Sigmoid colon (tissue), 7 donors: ENCODE measurements at regions of chr21 and their contacts with region 1.

Region 1: GRCh38 chr21:31098576-31099005 is 60.3 kb upstream of the KRTAP19-8 start:
- DNase-seq: peak; percentile 80
- H3K4me3 ChIP-seq: no peak overlapping the region
- H3K27ac ChIP-seq: no peak overlapping the region
- H3K4me1 ChIP-seq: no peaks in the 10 kb centered on the region
- H3K27me3 ChIP-seq: peaks cover 0 to 15% (median 0%) of the 10 kb centered on the region in 3 donors
- CTCF ChIP-seq: peak; percentile 16 to 81 (median 48)
- EP300 ChIP-seq: no peak
- POLR2A ChIP-seq: no peak

Region 2: GRCh38 chr21:30769724-30770431 is 328.7 kb before region 1 on chr21:
- intact Hi-C with region 1: no loop called
- DNase-seq: no peak
- H3K4me3 ChIP-seq: no peak overlapping the region
- H3K27ac ChIP-seq: no peak overlapping the region
- H3K4me1 ChIP-seq: no peaks in the 10 kb centered on the region
- H3K27me3 ChIP-seq: no peaks in the 10 kb centered on the region
- CTCF ChIP-seq: no peak
- EP300 ChIP-seq: no peak
- POLR2A ChIP-seq: no peak

Region 3: GRCh38 chr21:31180256-31181081 is 81.9 kb after region 1 on chr21:
- intact Hi-C with region 1: loop called (anchors 5 kb)
- DNase-seq: no peak
- H3K4me3 ChIP-seq: no peak overlapping the region
- H3K27ac ChIP-seq: no peak overlapping the region
- H3K4me1 ChIP-seq: peaks cover 0 to 4% (median 0%) of the 10 kb centered on the region in 4 donors
- H3K27me3 ChIP-seq: peaks cover 0 to 5% (median 0%) of the 10 kb centered on the region in 3 donors
- CTCF ChIP-seq: peak in 2 of 4 experiments; percentile 18 to 34
- EP300 ChIP-seq: no peak
- POLR2A ChIP-seq: no peak

Region 4: DNA sequence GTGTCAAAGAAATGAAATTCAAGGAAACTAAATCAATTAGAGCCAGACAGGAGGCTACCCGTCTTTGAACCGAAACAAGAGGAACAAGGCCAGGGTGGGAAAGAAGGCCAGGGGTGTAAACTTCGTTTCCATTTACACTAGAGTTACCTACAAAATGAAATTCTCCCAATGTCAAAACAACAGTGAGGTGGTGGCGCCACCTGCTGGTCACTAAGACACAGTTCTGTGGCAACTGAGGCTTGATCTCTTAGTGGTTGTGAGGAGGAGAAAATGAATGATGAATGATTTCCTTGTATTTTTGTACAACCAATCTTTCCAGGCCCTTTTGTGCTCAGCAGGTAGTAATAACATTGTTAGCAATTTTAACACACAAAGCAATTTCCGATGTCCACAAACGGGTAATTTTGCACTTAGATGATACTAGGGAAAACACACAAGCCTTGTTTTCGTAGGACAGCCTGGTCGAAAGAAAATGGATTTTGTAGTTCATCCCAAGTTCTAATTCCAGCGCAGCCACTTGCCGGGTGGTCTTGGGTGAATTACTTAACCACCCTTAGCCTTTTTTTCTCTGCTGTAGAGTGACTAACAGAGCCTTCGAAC is 506.1 kb after region 1 on chr21:
- intact Hi-C with region 1: loop called (anchors 5 kb)
- DNase-seq: peak; percentile 75
- H3K4me3 ChIP-seq: no peak overlapping the region
- H3K27ac ChIP-seq: no peak overlapping the region
- H3K4me1 ChIP-seq: peaks cover 0 to 3% (median 0%) of the 10 kb centered on the region in 4 donors
- H3K27me3 ChIP-seq: no peaks in the 10 kb centered on the region
- CTCF ChIP-seq: peak; percentile 13 to 77 (median 60)
- EP300 ChIP-seq: no peak
- POLR2A ChIP-seq: no peak